IMR-90 (cell line): ENCODE measurements at regions of chr3 and their contacts with region 1.

Region 1: GRCh38 chr3:180802837-180803236 is 109.6 kb upstream of the FXR1 start:
- DNase-seq: peak; percentile 4
- ATAC-seq: no peak
- H3K4me3 ChIP-seq: no peak overlapping the region
- H3K27ac ChIP-seq: no peak overlapping the region
- H3K4me1 ChIP-seq: no peaks in the 10 kb centered on the region
- H3K27me3 ChIP-seq: no peaks in the 10 kb centered on the region
- CTCF ChIP-seq: peak; percentile 49
- POLR2A ChIP-seq: no peak
- RAD21 ChIP-seq: peak; percentile 45

Region 2: DNA sequence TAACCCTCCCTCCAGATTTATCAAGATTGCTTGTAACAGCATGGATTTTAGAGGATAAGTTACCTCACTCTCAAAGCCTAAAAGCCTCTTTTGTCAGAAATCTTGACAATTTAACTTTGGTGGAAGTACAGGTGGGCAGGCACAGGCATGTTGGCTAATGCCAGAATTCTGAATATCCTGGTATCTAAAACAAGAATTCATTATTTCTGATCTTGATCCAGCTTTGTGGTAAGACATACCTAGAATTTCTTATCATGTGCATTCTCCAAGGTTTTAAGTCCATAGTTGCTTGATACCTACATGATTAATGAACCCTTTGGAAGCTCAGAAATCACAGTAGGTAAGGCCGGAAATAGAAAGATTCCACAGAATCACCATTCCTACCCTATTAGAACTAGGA is 310.8 kb before region 1 on chr3:
- CTCF ChIA-PET with region 1: no interaction called
- POLR2A ChIA-PET with region 1: no interaction called
- dilution Hi-C with region 1: no loop called
- in situ Hi-C with region 1: no loop called
- intact Hi-C with region 1: no loop called
- DNase-seq: no peak
- ATAC-seq: no peak
- H3K4me3 ChIP-seq: no peak overlapping the region
- H3K27ac ChIP-seq: no peak overlapping the region
- H3K4me1 ChIP-seq: no peaks in the 10 kb centered on the region
- H3K27me3 ChIP-seq: no peaks in the 10 kb centered on the region
- CTCF ChIP-seq: no peak
- POLR2A ChIP-seq: no peak
- RAD21 ChIP-seq: no peak

Region 3: DNA sequence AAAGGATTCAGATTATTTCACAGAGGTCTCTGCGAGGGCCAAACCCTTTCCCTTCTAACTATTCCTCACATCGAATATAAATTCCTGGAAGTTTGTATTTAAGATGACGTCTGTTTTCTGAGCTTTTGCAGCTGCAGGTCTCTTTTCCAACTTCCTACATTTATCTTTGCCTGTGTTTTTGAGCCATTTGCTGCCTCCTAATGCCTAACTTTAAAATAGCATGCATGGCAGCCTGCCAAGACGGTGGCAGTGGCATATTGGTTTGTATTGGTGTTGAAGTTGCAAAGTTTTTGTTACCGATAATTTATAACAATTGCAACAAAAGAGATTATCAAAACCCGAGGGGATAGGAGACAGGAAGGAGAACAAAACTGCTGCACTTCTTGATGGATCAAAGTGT is 373.8 kb after region 1 on chr3:
- CTCF ChIA-PET with region 1: no interaction called
- POLR2A ChIA-PET with region 1: no interaction called
- dilution Hi-C with region 1: no loop called
- in situ Hi-C with region 1: no loop called
- intact Hi-C with region 1: loop called (anchors 5 kb)
- DNase-seq: peak; percentile 0
- ATAC-seq: no peak
- H3K4me3 ChIP-seq: no peak overlapping the region
- H3K27ac ChIP-seq: no peak overlapping the region
- H3K4me1 ChIP-seq: no peaks in the 10 kb centered on the region
- H3K27me3 ChIP-seq: no peaks in the 10 kb centered on the region
- CTCF ChIP-seq: 0 out of 2 replicates have a peak, but pooled peaks have one; percentile 19
- POLR2A ChIP-seq: no peak
- RAD21 ChIP-seq: no peak; the same call in 1 of the 2 replicates

Region 4: GRCh38 chr3:181278468-181279238 is 475.8 kb after region 1 on chr3:
- CTCF ChIA-PET with region 1: no interaction called
- POLR2A ChIA-PET with region 1: no interaction called
- dilution Hi-C with region 1: no loop called
- in situ Hi-C with region 1: no loop called
- intact Hi-C with region 1: loop called (anchors 5 kb)
- DNase-seq: no peak
- ATAC-seq: no peak
- H3K4me3 ChIP-seq: no peak overlapping the region
- H3K27ac ChIP-seq: no peak overlapping the region
- H3K4me1 ChIP-seq: no peaks in the 10 kb centered on the region
- H3K27me3 ChIP-seq: no peaks in the 10 kb centered on the region
- CTCF ChIP-seq: 0 out of 2 replicates have a peak, but pooled peaks have one; percentile 18
- POLR2A ChIP-seq: no peak
- RAD21 ChIP-seq: no peak